ENCODE measurements at regions of chr5 and their contacts with region 1.

Region 1: DNA sequence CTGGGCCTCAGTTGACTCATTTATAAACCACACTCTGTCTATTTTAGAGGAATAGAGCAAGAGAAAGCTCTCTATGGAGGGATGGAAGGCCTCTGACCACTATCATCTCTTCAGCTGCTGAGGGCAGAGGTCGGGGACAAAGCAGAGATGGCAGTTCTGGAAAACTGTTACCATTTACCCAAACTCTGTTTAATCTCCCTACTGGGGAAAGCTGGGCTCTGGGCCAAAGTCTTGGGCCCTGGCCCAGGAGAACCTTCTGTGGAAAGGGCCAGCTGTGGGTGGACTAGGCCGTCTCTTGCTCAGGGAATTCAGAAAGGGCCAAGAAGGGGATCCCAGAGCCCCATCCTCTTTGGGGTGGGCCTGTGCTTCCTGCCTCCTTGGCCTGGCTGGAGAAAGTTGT is 100.0 kb downstream of the PSD2 start:
- DNase-seq: no peak
- H3K4me3 ChIP-seq: no peak overlapping the region
- H3K27ac ChIP-seq: no peak overlapping the region
- H3K4me1 ChIP-seq: no peaks in the 10 kb centered on the region
- H3K27me3 ChIP-seq: peaks cover 4 to 27% (median 17%) of the 10 kb centered on the region in 4 experiments
- CTCF ChIP-seq: no peak
- EP300 ChIP-seq: no peak
- POLR2A ChIP-seq: no peak
- RAD21 ChIP-seq: no peak

Region 2: GRCh38 chr5:139850423-139851016 is 45.1 kb before region 1 on chr5:
- CTCF ChIA-PET with region 1: no interaction called
- POLR2A ChIA-PET with region 1: no interaction called
- DNase-seq: no peak
- H3K4me3 ChIP-seq: no peak overlapping the region
- H3K27ac ChIP-seq: no peak overlapping the region
- H3K4me1 ChIP-seq: peaks cover 0 to 2% (median 1%) of the 10 kb centered on the region in 4 experiments; a peak in 5 of 7 replicates
- H3K27me3 ChIP-seq: peaks cover 16 to 45% (median 41%) of the 10 kb centered on the region in 4 experiments
- CTCF ChIP-seq: no peak
- EP300 ChIP-seq: no peak
- POLR2A ChIP-seq: no peak
- RAD21 ChIP-seq: no peak

Region 3: DNA sequence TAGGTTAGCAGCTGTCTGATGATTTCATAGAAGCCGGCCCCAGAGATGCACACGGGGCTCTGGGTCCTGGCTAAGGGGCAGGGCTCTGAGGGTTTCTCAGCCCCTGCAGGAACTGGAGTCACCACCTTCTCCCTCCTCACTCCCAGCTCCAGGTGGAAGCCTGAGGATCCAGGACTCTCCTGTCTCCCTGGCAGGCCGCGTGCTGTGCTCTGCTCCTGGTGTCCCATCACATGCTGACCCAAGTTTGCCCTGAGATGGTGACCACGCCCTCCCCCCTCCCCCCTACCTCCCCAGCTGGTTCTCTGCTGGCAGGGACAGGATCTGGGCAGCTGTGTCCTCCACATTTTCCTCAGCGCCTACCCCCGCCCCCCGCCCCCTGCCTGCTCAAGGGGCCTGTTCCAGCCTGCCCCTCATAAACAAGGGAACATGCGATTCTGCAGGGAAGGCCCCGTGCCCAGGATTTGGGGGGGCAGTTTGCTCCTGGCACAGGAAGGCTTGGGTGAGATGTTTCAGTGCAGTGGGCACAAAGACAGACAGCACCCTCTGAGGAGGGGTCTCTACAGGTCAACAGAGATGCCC is 12.6 kb before region 1 on chr5:
- CTCF ChIA-PET with region 1: interaction called, 15 read pairs
- POLR2A ChIA-PET with region 1: no interaction called
- DNase-seq: no peak
- H3K4me3 ChIP-seq: no peak overlapping the region
- H3K27ac ChIP-seq: no peak overlapping the region
- H3K4me1 ChIP-seq: peaks cover 0 to 9% (median 0%) of the 10 kb centered on the region in 4 experiments; a peak in 3 of 7 replicates
- H3K27me3 ChIP-seq: peaks cover 0 to 2% (median 0%) of the 10 kb centered on the region in 4 experiments; a peak in 2 of 7 replicates
- CTCF ChIP-seq: no peak
- EP300 ChIP-seq: no peak
- POLR2A ChIP-seq: no peak
- RAD21 ChIP-seq: no peak

Region 4: DNA sequence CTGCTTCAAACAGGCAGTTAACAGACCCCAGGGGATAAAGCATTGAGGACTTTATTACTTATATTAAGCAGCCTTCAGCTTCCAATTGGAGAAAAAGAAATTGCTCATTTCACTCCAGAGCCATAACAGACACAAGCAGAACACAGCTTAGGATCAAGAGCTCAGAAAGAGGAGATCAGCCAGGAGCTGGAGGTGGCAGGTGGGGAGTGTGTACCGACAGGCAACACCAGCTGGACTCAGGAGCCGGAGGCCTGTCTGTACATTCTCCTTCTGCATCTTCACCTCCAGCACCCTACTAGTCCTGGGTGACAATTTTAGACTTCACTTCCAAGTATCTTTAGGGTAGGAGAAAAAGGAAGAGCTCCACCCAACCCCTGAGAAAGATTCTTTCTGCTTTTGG is 111.7 kb after region 1 on chr5:
- CTCF ChIA-PET with region 1: no interaction called
- POLR2A ChIA-PET with region 1: no interaction called
- DNase-seq: no peak
- H3K4me3 ChIP-seq: no peak overlapping the region
- H3K27ac ChIP-seq: no peak overlapping the region
- H3K4me1 ChIP-seq: no peaks in the 10 kb centered on the region
- H3K27me3 ChIP-seq: peaks cover 0 to 7% (median 0%) of the 10 kb centered on the region in 4 experiments; a peak in 1 of 7 replicates
- CTCF ChIP-seq: no peak
- EP300 ChIP-seq: no peak
- POLR2A ChIP-seq: no peak
- RAD21 ChIP-seq: no peak